ENCODE measurements at regions of chr1 and their contacts with region 1.

Region 1: GRCh38 chr1:18100491-18101063 is 7.0 kb upstream of the IGSF21 start:
- DNase-seq: peak; percentile 5
- ATAC-seq: peak; percentile 48
- H3K4me3 ChIP-seq: no peak overlapping the region
- H3K27ac ChIP-seq: no peak overlapping the region
- H3K4me1 ChIP-seq: no peaks in the 10 kb centered on the region
- H3K27me3 ChIP-seq: peaks cover 0 to under 1% of the 10 kb centered on the region in 2 experiments; a peak in 2 of 4 replicates
- CTCF ChIP-seq: peak; percentile 72 to 85 (median 73)
- EP300 ChIP-seq: no peak
- POLR2A ChIP-seq: no peak
- RAD21 ChIP-seq: peak; percentile 56; the same call in 1 of the 2 replicates

Region 2: GRCh38 chr1:17837233-17838030 is 263.1 kb before region 1 on chr1:
- CTCF ChIA-PET with region 1: no interaction called
- POLR2A ChIA-PET with region 1: no interaction called
- RAD21 ChIA-PET with region 1: no interaction called
- SMC1A ChIA-PET with region 1: no interaction called
- in situ Hi-C with region 1: no loop called
- intact Hi-C with region 1: no loop called
- DNase-seq: no peak
- ATAC-seq: no peak
- H3K4me3 ChIP-seq: no peak overlapping the region
- H3K27ac ChIP-seq: no peak overlapping the region
- H3K4me1 ChIP-seq: no peaks in the 10 kb centered on the region
- H3K27me3 ChIP-seq: no peaks in the 10 kb centered on the region
- CTCF ChIP-seq: no peak
- EP300 ChIP-seq: no peak
- POLR2A ChIP-seq: no peak
- RAD21 ChIP-seq: no peak

Region 3: GRCh38 chr1:17984583-17984982 is 116.0 kb before region 1 on chr1:
- CTCF ChIA-PET with region 1: interaction called, 9 read pairs
- POLR2A ChIA-PET with region 1: no interaction called
- RAD21 ChIA-PET with region 1: interaction called, 6 read pairs
- SMC1A ChIA-PET with region 1: interaction called, 8 read pairs
- in situ Hi-C with region 1: no loop called
- intact Hi-C with region 1: loop called (anchors 1 kb)
- DNase-seq: no peak
- ATAC-seq: peak; percentile 42; the same call in 1 of the 3 replicates
- H3K4me3 ChIP-seq: no peak overlapping the region
- H3K27ac ChIP-seq: no peak overlapping the region
- H3K4me1 ChIP-seq: no peaks in the 10 kb centered on the region
- H3K27me3 ChIP-seq: no peaks in the 10 kb centered on the region
- CTCF ChIP-seq: peak; percentile 60 to 76 (median 75)
- EP300 ChIP-seq: no peak
- POLR2A ChIP-seq: no peak
- RAD21 ChIP-seq: peak; percentile 23; the same call in 1 of the 2 replicates